ENCODE measurements at regions of chr17 and their contacts with region 1.

Region 1: GRCh38 chr17:78360371-78361224 is 721 bp upstream of the SOCS3 start:
- DNase-seq: peak; percentile 87
- H3K4me3 Mint-ChIP-seq: peak overlapping the region; percentile 79
- H3K27ac Mint-ChIP-seq: peak overlapping the region; percentile 85
- H3K4me1 Mint-ChIP-seq: peaks cover 48% of the 10 kb centered on the region
- H3K27me3 Mint-ChIP-seq: no peaks in the 10 kb centered on the region

Region 2: GRCh38 chr17:78289802-78290363 is 70.7 kb before region 1 on chr17:
- intact Hi-C with region 1: loop called (anchors 1 kb)
- DNase-seq: peak; percentile 68
- H3K4me3 Mint-ChIP-seq: no peak overlapping the region
- H3K27ac Mint-ChIP-seq: no peak overlapping the region
- H3K4me1 Mint-ChIP-seq: peaks cover 6% of the 10 kb centered on the region
- H3K27me3 Mint-ChIP-seq: no peaks in the 10 kb centered on the region

Region 3: GRCh38 chr17:78313735-78314648 is 46.6 kb before region 1 on chr17:
- intact Hi-C with region 1: loop called (anchors 1 kb)
- DNase-seq: peak; percentile 72
- H3K4me3 Mint-ChIP-seq: peak overlapping the region; percentile 75
- H3K27ac Mint-ChIP-seq: peak overlapping the region; percentile 59
- H3K4me1 Mint-ChIP-seq: peaks cover 44% of the 10 kb centered on the region
- H3K27me3 Mint-ChIP-seq: peaks cover 9% of the 10 kb centered on the region

Region 4: GRCh38 chr17:78378225-78379130 is 17.9 kb after region 1 on chr17 and contains the start of gene PGS1:
- intact Hi-C with region 1: loop called (anchors 1 kb)
- DNase-seq: peak; percentile 84
- H3K4me3 Mint-ChIP-seq: peak within 1 kb of the TSS; percentile 97
- H3K27ac Mint-ChIP-seq: peak within 1 kb of the TSS; percentile 100
- H3K4me1 Mint-ChIP-seq: peaks cover 58% of the 10 kb centered on the region
- H3K27me3 Mint-ChIP-seq: no peaks in the 10 kb centered on the region
- total RNA-seq, gene PGS1: 71.9 and 73.5 TPM in 2 replicates

Region 5: GRCh38 chr17:78421484-78422266 is 61.1 kb after region 1 on chr17:
- intact Hi-C with region 1: loop called (anchors 1 kb)
- DNase-seq: peak; percentile 63
- H3K4me3 Mint-ChIP-seq: peak overlapping the region; percentile 12
- H3K27ac Mint-ChIP-seq: peak overlapping the region; percentile 64
- H3K4me1 Mint-ChIP-seq: peaks cover 52% of the 10 kb centered on the region
- H3K27me3 Mint-ChIP-seq: no peaks in the 10 kb centered on the region

Region 6: DNA sequence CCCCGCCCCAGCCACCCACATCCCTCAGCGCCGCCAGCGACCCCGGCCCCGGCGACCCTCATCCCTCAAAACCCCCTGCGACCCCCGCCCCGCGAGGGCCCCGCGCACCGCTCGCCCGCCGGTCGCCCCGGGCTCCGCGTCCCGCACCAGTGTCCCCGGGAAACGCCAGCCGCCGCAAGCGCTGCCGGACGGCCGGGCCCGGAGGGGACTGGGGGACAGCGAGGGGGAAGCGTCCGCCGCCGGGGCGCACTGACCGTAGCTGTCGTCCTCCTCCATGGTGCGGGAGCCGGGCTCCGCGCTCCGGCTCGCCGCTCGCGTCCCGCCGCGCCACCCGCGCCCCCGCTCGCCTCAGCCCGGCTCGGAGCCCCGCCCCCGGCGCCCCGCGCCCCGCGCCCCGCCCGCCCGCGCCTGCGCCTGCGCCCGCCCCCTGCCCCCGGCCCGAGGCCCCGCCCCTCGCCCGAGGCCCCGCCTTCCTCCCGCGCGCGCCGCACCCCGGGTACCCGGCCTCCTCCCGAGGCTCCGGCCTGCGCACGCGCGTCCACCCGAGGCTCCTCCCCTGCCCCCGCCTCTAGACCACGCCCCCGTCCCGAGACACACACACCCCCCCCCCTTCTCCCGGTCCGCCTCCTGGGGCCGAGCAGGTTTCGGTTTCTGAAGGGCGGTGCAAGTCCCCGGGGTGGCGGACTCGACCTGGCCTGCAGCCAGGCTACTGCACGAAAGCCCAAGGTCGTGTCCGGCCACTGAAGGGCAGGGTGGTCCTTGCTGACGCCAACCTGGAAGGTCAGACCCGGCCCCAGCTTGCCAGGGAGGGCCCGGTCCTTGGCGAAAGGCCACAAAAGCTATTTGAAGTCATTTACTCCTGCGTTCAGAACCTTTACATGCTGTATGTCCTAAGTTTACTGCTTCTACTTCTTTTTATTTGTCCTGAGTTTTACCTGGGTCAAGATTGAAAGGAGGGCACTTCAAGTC is 421.6 kb after region 1 on chr17 and contains the start of gene CYTH1:
- intact Hi-C with region 1: loop called (anchors 2 kb)
- DNase-seq: peak; percentile 96
- H3K4me3 Mint-ChIP-seq: peak within 1 kb of the TSS; percentile 90
- H3K27ac Mint-ChIP-seq: peak within 1 kb of the TSS; percentile 91
- H3K4me1 Mint-ChIP-seq: peaks cover 51% of the 10 kb centered on the region
- H3K27me3 Mint-ChIP-seq: no peaks in the 10 kb centered on the region
- total RNA-seq, gene CYTH1: 147 TPM in 2 replicates

Measured in activated T-helper 1 cell treated with anti-CD3 and anti-CD28 coated beads, Interleukin-12 subunit alpha, Interleukin-12 subunit beta, Interleukin-2, Interleukin-4 antibody, amounts not matched to agents 30 ng/mL and 10 ng/mL and 1 ng/mL, durations not matched to agents 14 hours and 24 hours and 36 hours (primary cell).